A549 (cell line): ENCODE measurements at regions of chr7 and their contacts with region 1.

Region 1: DNA sequence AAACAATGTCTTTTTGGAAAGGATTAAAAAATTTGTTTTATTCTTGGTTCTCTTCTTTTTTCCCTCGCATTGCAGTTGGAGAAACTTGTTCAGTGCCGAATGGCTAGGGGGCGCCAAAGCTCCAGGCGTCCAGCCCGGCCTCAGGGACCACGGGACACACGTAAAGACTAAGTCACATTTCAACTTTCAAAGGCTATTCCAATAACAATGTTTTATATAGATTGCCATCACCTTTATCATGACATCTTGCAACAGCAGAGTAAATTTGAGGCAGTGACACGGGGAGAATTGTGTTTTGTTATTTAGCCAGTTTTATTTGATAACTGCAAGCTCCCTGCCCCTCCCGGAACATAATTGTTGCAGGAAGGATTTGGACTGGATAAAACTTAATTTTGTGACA is 2.2 kb upstream of the IGFBP3 start:
- DNase-seq: peak in 1 of 2 experiments; percentile 81
- ATAC-seq: peak in 1 of 2 experiments; percentile 64; a peak in 3 of 6 replicates
- H3K4me3 ChIP-seq: peak overlapping the region; percentile 66; the same call in 2 of the 3 replicates
- H3K27ac ChIP-seq: peak overlapping the region; percentile 77 to 92
- H3K4me1 ChIP-seq: peaks cover 49% of the 10 kb centered on the region
- CTCF ChIP-seq: peak; percentile 95
- EP300 ChIP-seq: no peak
- POLR2A ChIP-seq: no peak
- RAD21 ChIP-seq: peak; percentile 99

Region 2: DNA sequence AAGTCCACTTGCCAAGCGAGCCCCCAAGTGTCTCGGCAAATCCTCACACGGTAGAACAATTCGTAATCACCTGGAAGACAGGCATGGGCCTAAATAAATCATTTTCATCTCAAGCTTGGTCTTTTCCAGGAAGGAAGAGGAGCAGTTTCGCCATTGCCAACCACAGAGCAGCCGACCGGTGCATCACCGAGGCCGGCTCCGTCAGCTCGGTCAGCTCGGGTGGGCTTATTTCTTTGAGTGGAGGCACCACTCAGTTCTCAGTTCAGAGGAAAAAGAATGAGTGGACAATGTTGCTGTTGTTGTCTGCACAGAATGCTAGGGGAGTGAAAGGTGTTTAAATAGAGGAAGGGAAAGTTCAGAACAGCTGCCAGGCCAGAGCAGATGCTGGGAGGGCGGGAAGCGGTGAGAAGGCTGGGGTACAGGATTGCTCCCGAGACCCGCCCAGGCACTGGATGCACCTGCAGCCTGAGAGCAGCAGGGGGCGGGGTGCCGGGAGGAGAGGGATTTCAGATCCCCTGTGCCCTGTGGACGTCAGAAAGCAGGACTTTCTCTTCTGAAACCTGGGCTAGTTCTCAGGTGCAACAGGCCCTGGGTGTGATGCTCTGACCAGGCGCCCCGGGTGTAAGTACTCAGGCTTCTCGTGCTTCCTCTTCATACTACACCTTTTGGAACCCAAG is 15.5 kb after region 1 on chr7:
- CTCF ChIA-PET with region 1: interaction called, 54 read pairs
- POLR2A ChIA-PET with region 1: no interaction called
- DNase-seq: no peak
- ATAC-seq: peak in 1 of 2 experiments; percentile 56; a peak in 3 of 6 replicates
- H3K4me3 ChIP-seq: no peak overlapping the region
- H3K27ac ChIP-seq: no peak overlapping the region
- H3K4me1 ChIP-seq: no peaks in the 10 kb centered on the region
- CTCF ChIP-seq: no peak
- EP300 ChIP-seq: no peak
- POLR2A ChIP-seq: no peak
- RAD21 ChIP-seq: no peak

Region 3: DNA sequence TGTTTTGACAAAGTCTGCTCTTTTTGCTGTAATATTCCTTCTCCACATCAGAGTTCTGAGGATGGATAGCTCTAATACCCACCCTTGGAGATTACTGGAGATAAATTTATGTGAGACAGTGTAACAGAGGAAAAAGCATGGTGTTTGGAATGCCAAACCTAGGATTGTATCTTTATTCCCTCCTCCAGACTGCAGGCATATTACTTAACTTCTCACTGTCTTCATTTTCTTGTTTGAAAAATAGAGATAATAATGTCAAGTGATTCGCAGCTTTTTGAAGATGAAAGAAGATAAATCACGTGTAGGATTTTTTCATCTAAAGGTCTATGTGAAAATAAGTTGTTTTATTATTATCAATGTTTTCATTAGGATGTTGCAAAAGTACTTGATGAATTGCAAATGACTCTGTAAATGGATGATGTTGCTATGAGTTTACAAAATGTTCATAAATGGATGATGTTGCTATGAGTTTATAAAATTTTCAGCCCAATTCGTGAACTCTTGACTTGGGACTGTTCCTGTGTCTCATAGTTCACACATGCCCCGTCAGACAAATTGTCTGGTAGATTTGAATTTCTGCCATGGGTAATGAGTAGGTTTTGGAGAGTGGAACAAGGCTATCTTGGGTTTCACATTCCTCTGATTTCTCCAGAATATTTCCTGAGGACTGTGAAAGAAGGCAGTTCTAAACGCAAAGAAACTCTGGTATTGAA is 110.9 kb after region 1 on chr7:
- CTCF ChIA-PET with region 1: interaction called, 10 read pairs
- POLR2A ChIA-PET with region 1: no interaction called
- DNase-seq: no peak
- ATAC-seq: no peak
- H3K4me3 ChIP-seq: no peak overlapping the region
- H3K27ac ChIP-seq: peak overlapping the region; percentile 54 to 55; a peak in 2 of 6 replicates
- H3K4me1 ChIP-seq: peaks cover 20% of the 10 kb centered on the region
- CTCF ChIP-seq: no peak
- EP300 ChIP-seq: no peak
- POLR2A ChIP-seq: no peak
- RAD21 ChIP-seq: no peak

Region 4: DNA sequence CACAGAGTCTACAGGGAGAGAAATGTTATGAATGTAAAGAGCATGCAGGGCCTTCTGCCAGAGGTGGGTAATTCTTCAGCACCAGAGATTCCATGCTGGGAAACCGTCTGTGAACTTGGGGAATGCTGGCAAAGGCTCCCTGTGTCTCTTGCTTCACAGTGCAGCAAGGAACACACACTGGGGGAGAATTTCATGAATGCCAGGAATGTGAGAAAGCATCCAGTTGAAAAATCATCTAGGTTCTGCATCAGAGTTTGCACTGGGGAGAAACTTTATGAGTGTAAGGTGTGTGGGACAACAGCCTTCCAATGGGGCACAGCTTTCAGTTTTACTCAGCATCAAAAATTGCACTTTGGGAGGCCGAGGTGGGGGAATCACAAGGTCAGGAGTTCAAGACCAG is 222.1 kb after region 1 on chr7:
- CTCF ChIA-PET with region 1: interaction called, 38 read pairs
- POLR2A ChIA-PET with region 1: interaction called, 3 read pairs
- DNase-seq: peak; percentile 66 to 93
- ATAC-seq: peak; percentile 95 to 97
- H3K4me3 ChIP-seq: no peak overlapping the region
- H3K27ac ChIP-seq: peak overlapping the region; percentile 84 to 92
- H3K4me1 ChIP-seq: peaks cover 32% of the 10 kb centered on the region
- CTCF ChIP-seq: no peak
- EP300 ChIP-seq: peak; percentile 93 to 97
- POLR2A ChIP-seq: no peak
- RAD21 ChIP-seq: peak; percentile 47 to 74; a peak in 4 of 5 replicates

Region 5: GRCh38 chr7:46257766-46258448 is 334.6 kb after region 1 on chr7:
- CTCF ChIA-PET with region 1: interaction called, 11 read pairs
- POLR2A ChIA-PET with region 1: no interaction called
- DNase-seq: peak; percentile 15 to 72
- ATAC-seq: peak; percentile 81 to 90
- H3K4me3 ChIP-seq: no peak overlapping the region
- H3K27ac ChIP-seq: peak overlapping the region; percentile 67 to 88
- H3K4me1 ChIP-seq: peaks cover 42% of the 10 kb centered on the region
- CTCF ChIP-seq: no peak
- EP300 ChIP-seq: no peak
- POLR2A ChIP-seq: no peak
- RAD21 ChIP-seq: no peak

Region 6: GRCh38 chr7:47190462-47190861 is 1267.2 kb after region 1 on chr7:
- CTCF ChIA-PET with region 1: interaction called, 12 read pairs
- POLR2A ChIA-PET with region 1: no interaction called
- DNase-seq: no peak
- ATAC-seq: no peak
- H3K4me3 ChIP-seq: no peak overlapping the region
- H3K27ac ChIP-seq: no peak overlapping the region
- H3K4me1 ChIP-seq: no peaks in the 10 kb centered on the region
- CTCF ChIP-seq: no peak
- EP300 ChIP-seq: no peak
- POLR2A ChIP-seq: no peak
- RAD21 ChIP-seq: no peak